ENCODE measurements at regions of chr6 and their contacts with region 1.

Region 1: DNA sequence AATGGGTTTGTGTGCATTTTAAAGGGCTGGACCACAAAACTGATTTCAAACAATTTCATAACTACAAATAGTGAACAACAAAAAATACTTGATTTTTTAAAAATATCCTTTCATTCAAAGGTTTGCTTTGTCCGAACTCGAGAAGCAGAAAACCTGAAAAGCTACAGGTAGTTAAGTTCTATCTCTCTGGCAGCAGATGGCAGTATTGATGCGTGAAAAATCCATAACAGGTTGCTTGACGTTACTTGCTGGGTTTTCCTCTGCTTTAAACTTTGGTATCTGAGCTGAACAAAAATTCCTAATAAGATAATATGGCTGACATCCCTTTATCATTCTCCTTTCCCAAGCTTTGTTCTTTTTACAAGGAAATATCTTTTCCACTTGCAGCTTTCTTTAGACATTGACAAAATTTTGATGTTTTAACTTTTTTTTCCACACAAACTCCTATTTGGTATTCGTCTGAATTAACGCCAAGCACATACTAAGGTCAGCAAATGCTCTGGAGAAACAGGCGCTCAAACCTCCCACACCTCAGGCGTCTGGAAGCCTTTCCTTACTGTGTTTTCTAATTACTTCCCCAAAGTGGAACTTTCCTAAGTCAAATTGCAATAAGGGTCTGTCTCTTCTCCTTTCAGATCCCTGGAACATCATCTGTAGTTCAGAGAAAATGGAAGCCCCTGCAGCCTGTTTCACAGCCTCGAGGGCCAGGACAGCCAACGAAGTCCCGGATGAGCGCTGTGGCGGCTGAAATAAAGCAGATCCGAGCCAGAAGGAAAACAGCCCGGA is 50.3 kb upstream of the GFRAL start:
- DNase-seq: peak; percentile 4
- ATAC-seq: no peak
- H3K4me3 Mint-ChIP-seq: no peak overlapping the region
- H3K27ac Mint-ChIP-seq: no peak overlapping the region
- H3K4me1 Mint-ChIP-seq: no peaks in the 10 kb centered on the region
- H3K27me3 Mint-ChIP-seq: no peaks in the 10 kb centered on the region
- CTCF ChIP-seq: peak; percentile 47

Region 2: DNA sequence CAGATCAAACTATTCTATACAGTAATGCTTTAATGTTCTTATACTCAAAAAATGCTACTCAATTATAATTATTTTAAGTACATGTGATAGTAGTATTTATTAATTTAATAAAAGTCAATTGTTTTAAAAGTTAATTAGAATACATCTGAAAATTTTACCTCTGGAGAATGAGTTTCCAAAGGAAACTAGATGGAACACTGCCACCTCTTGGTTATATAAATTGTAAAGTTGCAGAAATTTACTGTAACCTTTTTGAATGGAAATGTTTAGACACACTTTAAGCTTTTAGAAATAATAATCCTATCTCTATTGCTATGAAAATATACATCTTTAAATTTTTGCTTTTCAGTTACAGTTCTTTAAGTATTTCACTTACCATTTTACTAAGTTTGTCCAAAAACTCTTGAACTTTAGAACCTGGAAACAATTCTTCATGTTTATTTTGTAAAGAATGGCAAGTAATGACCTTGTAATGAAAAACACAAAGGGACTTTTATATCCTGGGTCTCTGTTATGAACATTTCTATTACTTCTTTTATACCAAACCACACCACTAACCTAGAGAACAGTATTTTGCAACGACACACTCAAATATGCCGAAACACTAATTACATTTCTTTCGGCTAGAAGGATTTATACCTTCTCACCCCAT is 609.4 kb after region 1 on chr6:
- CTCF ChIA-PET with region 1: no interaction called
- POLR2A ChIA-PET with region 1: no interaction called
- intact Hi-C with region 1: loop called (anchors 10 kb)
- DNase-seq: no peak
- ATAC-seq: no peak
- H3K4me3 Mint-ChIP-seq: no peak overlapping the region
- H3K27ac Mint-ChIP-seq: no peak overlapping the region
- H3K4me1 Mint-ChIP-seq: no peaks in the 10 kb centered on the region
- H3K27me3 Mint-ChIP-seq: no peaks in the 10 kb centered on the region
- CTCF ChIP-seq: no peak